BJ (cell line): ENCODE measurements at regions of chr20 and their contacts with region 1.

Region 1: GRCh38 chr20:49484180-49485140 is 2.0 kb upstream of the KCNB1 start:
- DNase-seq: no peak
- H3K4me3 ChIP-seq: peak overlapping the region; percentile 42
- H3K27me3 ChIP-seq: peaks cover 15% of the 10 kb centered on the region
- CTCF ChIP-seq: peak; percentile 69

Region 2: GRCh38 chr20:49344975-49345374 is 139.5 kb before region 1 on chr20:
- CTCF ChIA-PET with region 1: interaction called, 15 read pairs
- POLR2A ChIA-PET with region 1: no interaction called
- DNase-seq: peak; percentile 92
- H3K4me3 ChIP-seq: peak overlapping the region; percentile 1; the same call in 1 of the 2 replicates
- H3K27me3 ChIP-seq: no peaks in the 10 kb centered on the region; the same call in 1 of the 2 replicates
- CTCF ChIP-seq: no peak

Region 3: DNA sequence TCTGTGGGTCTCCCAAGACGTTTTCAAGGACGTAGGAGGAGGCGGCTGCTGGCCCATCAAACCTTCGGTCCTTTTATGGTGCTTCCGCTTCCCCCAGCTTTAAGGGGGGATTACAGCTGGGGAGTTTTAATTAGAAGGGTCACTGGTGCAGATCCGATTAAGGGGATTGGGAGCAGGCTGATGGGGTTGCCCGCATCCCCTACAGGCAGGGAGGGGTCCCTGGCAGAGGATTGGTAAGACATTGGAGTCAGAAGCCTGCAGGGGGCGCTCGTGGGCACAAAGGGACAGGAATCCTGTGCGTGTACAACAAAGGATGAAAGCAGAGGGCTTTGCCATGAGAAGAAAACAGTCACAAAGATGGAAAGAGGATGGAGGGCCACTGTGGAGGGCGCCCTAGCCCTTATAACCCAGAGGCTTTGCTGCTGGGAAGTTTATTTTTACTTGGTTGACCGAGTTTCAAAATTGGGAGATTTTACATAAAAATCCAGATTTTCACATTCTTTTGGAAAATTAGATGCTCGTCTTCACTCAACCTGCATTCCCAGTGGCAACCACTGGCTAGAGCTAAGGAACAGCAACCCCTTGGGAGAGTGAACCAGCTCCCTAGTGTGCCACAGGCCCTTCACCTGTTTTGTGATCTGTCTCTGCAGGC is 99.9 kb before region 1 on chr20:
- CTCF ChIA-PET with region 1: interaction called, 15 read pairs
- POLR2A ChIA-PET with region 1: no interaction called
- DNase-seq: no peak
- H3K4me3 ChIP-seq: no peak overlapping the region
- H3K27me3 ChIP-seq: peaks cover 3% of the 10 kb centered on the region; the same call in 1 of the 2 replicates
- CTCF ChIP-seq: peak; percentile 69

Region 4: GRCh38 chr20:49496553-49497397 is 12.3 kb after region 1 on chr20:
- CTCF ChIA-PET with region 1: interaction called, 27 read pairs
- POLR2A ChIA-PET with region 1: no interaction called
- DNase-seq: no peak
- H3K4me3 ChIP-seq: no peak overlapping the region
- H3K27me3 ChIP-seq: peaks cover 8% of the 10 kb centered on the region; the same call in 1 of the 2 replicates
- CTCF ChIP-seq: no peak

Region 5: GRCh38 chr20:49516916-49517789 is 32.7 kb after region 1 on chr20:
- CTCF ChIA-PET with region 1: interaction called, 10 read pairs
- POLR2A ChIA-PET with region 1: no interaction called
- DNase-seq: no peak
- H3K4me3 ChIP-seq: no peak overlapping the region
- H3K27me3 ChIP-seq: no peaks in the 10 kb centered on the region; the same call in 1 of the 2 replicates
- CTCF ChIP-seq: no peak

Region 6: DNA sequence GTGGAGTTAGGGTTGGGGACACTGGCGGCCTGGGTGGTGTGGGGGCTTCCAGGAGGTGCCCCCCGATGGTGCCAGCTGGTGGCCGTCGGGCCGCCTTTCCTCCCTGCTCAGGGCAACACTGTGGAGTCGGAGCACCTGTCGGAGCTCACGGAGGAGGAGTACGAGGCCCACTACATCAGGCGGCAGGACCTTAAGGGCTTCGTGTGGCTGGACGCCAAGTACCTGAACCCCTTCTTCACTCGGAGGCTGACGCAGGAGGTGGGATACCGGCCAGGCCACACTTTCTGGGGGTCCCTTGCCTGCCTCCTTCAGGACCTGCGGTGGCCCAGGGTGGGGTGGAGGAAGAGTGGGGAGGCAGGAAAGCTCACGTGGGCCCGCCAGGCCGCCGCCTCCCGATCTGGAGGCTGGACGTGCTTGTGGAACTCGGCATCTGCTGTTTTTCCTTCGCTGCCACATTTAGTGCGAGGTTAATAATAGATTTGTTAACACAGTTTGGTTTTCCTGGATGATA is 402.2 kb after region 1 on chr20:
- CTCF ChIA-PET with region 1: no interaction called
- POLR2A ChIA-PET with region 1: no interaction called
- DNase-seq: no peak
- H3K4me3 ChIP-seq: no peak overlapping the region
- H3K27me3 ChIP-seq: no peaks in the 10 kb centered on the region
- CTCF ChIP-seq: no peak